ENCODE measurements at regions of chr9 and their contacts with region 1.

Region 1: GRCh38 chr9:130770679-130771442 is 64.2 kb upstream of the ABL1 start:
- DNase-seq: peak; percentile 81
- H3K4me3 ChIP-seq: no peak overlapping the region
- H3K27ac ChIP-seq: no peak overlapping the region
- H3K4me1 ChIP-seq: peaks cover 27% of the 10 kb centered on the region
- H3K27me3 ChIP-seq: no peaks in the 10 kb centered on the region
- CTCF ChIP-seq: peak; percentile 30 to 47
- POLR2A ChIP-seq: no peak

Region 2: DNA sequence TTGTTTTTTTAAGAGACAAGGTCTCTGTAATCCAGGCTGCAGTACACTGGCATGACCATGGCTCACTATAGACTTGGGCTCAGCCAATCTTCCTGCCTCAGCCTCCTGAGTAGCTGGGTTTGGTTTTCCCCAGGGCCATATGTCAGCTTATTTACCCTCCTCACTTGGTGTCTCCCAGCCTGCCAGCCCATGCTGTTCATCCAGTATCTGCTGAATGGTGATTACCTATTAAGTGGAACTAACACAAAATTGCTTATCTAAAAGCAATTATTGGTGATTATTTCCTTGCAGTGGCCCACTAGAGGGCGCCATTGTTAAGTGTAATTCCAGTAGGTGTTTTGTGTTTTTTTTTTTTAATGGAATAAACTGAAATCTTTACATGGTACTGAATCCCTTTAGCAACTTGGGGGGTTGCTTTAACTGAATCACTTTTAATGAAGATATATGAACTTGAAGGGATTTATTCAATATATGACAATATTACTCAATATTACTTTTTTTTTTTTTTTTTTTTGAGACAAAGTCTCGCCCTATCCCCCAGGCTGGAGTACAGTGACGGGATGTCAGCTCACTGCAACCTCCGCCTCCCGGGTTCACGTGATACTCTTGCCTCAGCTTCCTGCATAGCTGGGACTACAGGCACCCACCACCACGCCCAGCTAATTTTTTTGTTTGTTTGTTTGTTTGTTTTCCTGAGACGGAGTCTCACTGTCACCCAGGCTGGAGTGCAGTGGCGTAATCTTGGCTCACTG is 63.5 kb before region 1 on chr9:
- CTCF ChIA-PET with region 1: interaction called, 8 read pairs
- POLR2A ChIA-PET with region 1: no interaction called
- dilution Hi-C with region 1: no loop called
- intact Hi-C with region 1: loop called (anchors 1 kb)
- DNase-seq: peak; percentile 65
- H3K4me3 ChIP-seq: no peak overlapping the region
- H3K27ac ChIP-seq: no peak overlapping the region
- H3K4me1 ChIP-seq: no peaks in the 10 kb centered on the region
- H3K27me3 ChIP-seq: no peaks in the 10 kb centered on the region
- CTCF ChIP-seq: peak; percentile 36 to 66
- POLR2A ChIP-seq: no peak

Region 3: DNA sequence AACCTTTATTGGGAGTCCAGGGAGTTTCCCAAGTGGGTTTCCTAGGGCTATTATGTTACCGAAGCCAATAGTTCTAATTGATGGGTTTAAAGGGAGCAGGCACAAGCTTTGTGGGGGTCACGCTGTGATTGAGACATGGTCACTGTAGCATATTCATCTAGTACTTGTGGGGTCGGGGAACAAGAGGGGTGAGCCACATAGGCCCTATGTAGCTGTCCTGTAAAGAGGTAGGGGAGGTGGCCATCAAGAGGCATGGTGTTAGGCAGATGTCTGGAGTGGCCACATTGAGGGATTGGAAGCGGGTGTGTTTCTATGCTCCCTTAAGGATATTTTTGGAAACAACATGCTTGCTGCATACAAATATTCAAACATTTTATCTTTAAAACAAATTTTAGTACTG is 27.2 kb before region 1 on chr9:
- CTCF ChIA-PET with region 1: no interaction called
- POLR2A ChIA-PET with region 1: no interaction called
- dilution Hi-C with region 1: no loop called
- intact Hi-C with region 1: no loop called
- DNase-seq: no peak
- H3K4me3 ChIP-seq: no peak overlapping the region
- H3K27ac ChIP-seq: no peak overlapping the region
- H3K4me1 ChIP-seq: peaks cover 23% of the 10 kb centered on the region
- H3K27me3 ChIP-seq: no peaks in the 10 kb centered on the region
- CTCF ChIP-seq: no peak
- POLR2A ChIP-seq: no peak

Region 4: GRCh38 chr9:130834371-130835311 is 63.8 kb after region 1 on chr9 and contains the start of gene ABL1:
- CTCF ChIA-PET with region 1: interaction called, 6 read pairs
- POLR2A ChIA-PET with region 1: no interaction called
- dilution Hi-C with region 1: no loop called
- intact Hi-C with region 1: loop called (anchors 1 kb)
- DNase-seq: peak; percentile 88
- H3K4me3 ChIP-seq: peak within 1 kb of the TSS; percentile 85 to 92 (median 89)
- H3K27ac ChIP-seq: peak within 1 kb of the TSS; percentile 85
- H3K4me1 ChIP-seq: peaks cover 47% of the 10 kb centered on the region
- H3K27me3 ChIP-seq: no peaks in the 10 kb centered on the region
- CTCF ChIP-seq: no peak
- POLR2A ChIP-seq: peak; percentile 60
- total RNA-seq, gene ABL1: 79.2 and 87.1 TPM in 2 replicates

Measured in endothelial cell of umbilical vein (primary cell).